PC-9 (cell line): ENCODE measurements at regions of chr1 and their contacts with region 1.

Region 1: DNA sequence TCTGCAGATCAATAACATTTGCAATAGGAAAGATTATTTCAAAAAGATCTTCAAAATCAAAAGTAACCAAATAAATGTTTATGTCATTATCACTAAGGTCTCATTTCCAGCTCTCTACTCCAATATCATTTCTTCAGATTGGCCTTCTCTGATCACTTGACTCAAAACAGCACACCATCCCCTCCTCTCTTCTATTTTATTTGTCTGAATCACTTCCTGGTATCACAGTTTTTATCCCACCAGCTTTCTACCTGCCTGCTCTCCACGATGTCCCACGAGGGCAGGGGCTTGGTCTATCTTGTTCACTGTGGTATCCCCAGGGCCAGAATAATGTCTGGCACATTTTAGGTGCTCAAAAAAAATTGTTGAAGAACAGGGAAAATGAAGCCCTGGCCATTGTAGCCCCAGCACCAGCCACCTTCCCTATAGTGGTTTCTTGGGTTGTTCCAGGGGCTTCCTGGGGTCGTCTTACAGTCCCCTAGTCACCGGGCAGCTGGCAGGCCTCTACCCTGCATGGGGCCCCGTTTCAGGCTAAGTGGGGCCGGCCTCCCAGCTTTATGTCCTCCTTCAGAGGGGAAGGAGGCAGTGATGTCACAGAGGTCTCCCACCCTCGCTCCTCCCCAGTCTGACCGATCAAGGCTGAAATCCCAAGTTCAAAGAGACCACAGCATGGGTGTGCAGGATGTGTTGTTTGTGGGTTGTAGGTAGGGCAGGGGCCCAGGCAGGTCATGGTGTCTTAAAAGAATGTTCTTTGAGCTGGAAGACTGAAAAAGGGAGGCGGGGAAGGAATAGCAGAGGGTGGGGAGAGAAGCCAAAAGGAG is 3.5 kb upstream of the PADI1 start:
- DNase-seq: peak; percentile 77 to 90
- H3K4me3 ChIP-seq: peak overlapping the region; percentile 15; the same call in 1 of the 2 replicates
- H3K27ac ChIP-seq: peak overlapping the region; percentile 90
- H3K4me1 ChIP-seq: peaks cover 57% of the 10 kb centered on the region
- H3K27me3 ChIP-seq: no peaks in the 10 kb centered on the region
- CTCF ChIP-seq: no peak

Region 2: GRCh38 chr1:17190010-17190995 is 11.1 kb before region 1 on chr1:
- CTCF ChIA-PET with region 1: no interaction called
- POLR2A ChIA-PET with region 1: interaction called, 26 read pairs
- intact Hi-C with region 1: loop called (anchors 1 kb)
- DNase-seq: peak; percentile 90 to 93
- H3K4me3 ChIP-seq: peak overlapping the region; percentile 30
- H3K27ac ChIP-seq: peak overlapping the region; percentile 86
- H3K4me1 ChIP-seq: peaks cover 26% of the 10 kb centered on the region
- H3K27me3 ChIP-seq: no peaks in the 10 kb centered on the region
- CTCF ChIP-seq: no peak